Activated B cell treated with CpG ODN at 0.5 μM for 24 hours (primary cell): ENCODE measurements at regions of chr9 and their contacts with region 1.

Region 1: DNA sequence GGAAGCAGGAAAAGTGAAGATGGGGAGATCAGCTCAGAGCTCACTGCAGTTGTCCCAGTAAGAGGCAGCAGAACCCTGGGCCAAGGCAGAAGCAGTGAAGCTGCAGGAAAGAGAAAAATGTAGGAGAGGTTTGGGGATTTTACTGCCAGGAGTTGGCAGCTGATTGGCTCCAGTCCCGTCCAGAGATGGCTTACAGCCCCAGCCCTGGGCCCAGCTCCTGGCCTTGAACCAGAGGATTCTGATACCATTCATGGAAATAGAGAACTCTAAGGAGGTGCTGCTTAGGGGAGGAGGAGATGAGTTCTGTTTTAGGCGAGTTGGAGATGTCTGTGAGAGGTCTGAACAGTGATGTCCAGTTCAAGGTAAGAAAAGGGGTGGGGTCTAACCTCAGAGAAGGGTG is 4.6 kb downstream of the MORN5 start:
- DNase-seq: no peak
- ATAC-seq: no peak
- H3K4me3 Mint-ChIP-seq: no peak overlapping the region
- H3K27ac Mint-ChIP-seq: no peak overlapping the region
- H3K4me1 Mint-ChIP-seq: peaks cover 8% of the 10 kb centered on the region
- H3K27me3 Mint-ChIP-seq: peaks cover 50% of the 10 kb centered on the region
- CTCF ChIP-seq: no peak

Region 2: GRCh38 chr9:120663380-120663779 is 1500.9 kb before region 1 on chr9:
- CTCF ChIA-PET with region 1: no interaction called
- POLR2A ChIA-PET with region 1: no interaction called
- intact Hi-C with region 1: no loop called
- DNase-seq: no peak
- ATAC-seq: no peak
- H3K4me3 Mint-ChIP-seq: no peak overlapping the region
- H3K27ac Mint-ChIP-seq: no peak overlapping the region
- H3K4me1 Mint-ChIP-seq: peaks cover 18% of the 10 kb centered on the region
- H3K27me3 Mint-ChIP-seq: no peaks in the 10 kb centered on the region
- CTCF ChIP-seq: no peak

Region 3: GRCh38 chr9:122213589-122214413 is 49.5 kb after region 1 on chr9:
- CTCF ChIA-PET with region 1: no interaction called
- POLR2A ChIA-PET with region 1: no interaction called
- intact Hi-C with region 1: loop called (anchors 5 kb)
- DNase-seq: peak; percentile 49
- ATAC-seq: peak; percentile 80
- H3K4me3 Mint-ChIP-seq: peak overlapping the region; percentile 76
- H3K27ac Mint-ChIP-seq: no peak overlapping the region
- H3K4me1 Mint-ChIP-seq: peaks cover 16% of the 10 kb centered on the region
- H3K27me3 Mint-ChIP-seq: peaks cover 69% of the 10 kb centered on the region
- CTCF ChIP-seq: no peak